ENCODE measurements at regions of chr12 and their contacts with region 1.

Region 1: GRCh38 chr12:401235-402028 is at the start of gene CCDC77:
- DNase-seq: peak; percentile 95
- H3K4me3 ChIP-seq: peak within 1 kb of the TSS; percentile 74 to 83
- H3K27ac ChIP-seq: peak within 1 kb of the TSS; percentile 44 to 54; a peak in 3 of 4 replicates
- H3K4me1 ChIP-seq: peaks cover 3 to 4% of the 10 kb centered on the region in 2 experiments; a peak in 3 of 4 replicates
- H3K27me3 ChIP-seq: no peaks in the 10 kb centered on the region
- CTCF ChIP-seq: peak; percentile 17; the same call in 1 of the 2 replicates
- EP300 ChIP-seq: no peak
- RAD21 ChIP-seq: no peak
- polyA plus RNA-seq, gene CCDC77: 5.9 and 6.4 TPM in 2 replicates

Region 2: GRCh38 chr12:159156-159782 is 242.2 kb before region 1 on chr12:
- CTCF ChIA-PET with region 1: no interaction called
- POLR2A ChIA-PET with region 1: no interaction called
- DNase-seq: no peak
- H3K4me3 ChIP-seq: no peak overlapping the region
- H3K27ac ChIP-seq: no peak overlapping the region
- H3K4me1 ChIP-seq: peaks cover 0 to 7% of the 10 kb centered on the region in 2 experiments; a peak in 1 of 4 replicates
- H3K27me3 ChIP-seq: no peaks in the 10 kb centered on the region
- CTCF ChIP-seq: no peak
- EP300 ChIP-seq: no peak
- RAD21 ChIP-seq: no peak

Region 3: DNA sequence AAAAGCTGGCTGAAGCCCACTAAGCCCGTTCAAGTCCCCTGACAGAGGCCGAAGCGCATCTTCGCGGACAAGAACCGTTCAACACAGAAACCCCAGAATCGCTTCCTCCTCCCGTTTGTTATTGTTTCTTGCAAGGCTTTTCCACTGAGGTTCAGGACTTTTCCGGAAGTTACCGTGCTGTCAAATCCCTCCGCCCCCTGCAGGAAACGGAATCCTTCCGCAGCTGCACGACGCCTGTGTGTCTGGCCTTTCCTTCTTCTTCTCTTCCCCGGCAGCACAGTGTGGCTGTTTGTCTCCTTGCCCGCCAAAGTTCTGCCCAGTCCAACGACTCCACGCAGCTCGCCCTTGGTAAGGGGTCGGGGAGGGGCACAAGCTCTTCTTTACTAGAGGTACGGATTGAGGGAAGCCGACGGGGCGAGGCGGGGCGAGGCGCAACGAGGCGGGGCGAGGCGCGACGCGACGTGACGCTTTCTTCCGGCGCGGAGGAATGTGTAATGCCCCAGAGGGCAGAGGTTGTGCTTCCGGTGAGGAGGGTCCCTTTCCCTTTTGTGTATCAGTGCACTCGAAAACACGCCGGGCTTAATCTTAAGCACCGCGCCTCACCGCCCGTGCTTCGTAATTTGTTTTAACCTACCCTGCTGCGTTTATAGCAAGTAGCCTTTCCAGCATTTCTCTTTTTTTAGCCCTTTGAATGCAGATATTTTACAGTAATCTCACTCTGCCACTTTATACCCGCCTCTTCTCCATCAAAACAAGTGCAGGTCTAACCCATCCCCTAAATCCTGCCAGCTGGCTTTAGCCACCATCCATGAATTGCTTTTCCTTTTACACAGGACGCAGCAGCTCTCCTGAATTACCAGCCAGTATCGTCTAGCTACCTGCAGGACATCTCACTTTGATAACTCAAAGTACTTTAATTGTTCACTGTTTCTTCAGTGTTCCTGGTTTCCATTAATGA is 12.0 kb before region 1 on chr12 and contains the start of gene KDM5A:
- CTCF ChIA-PET with region 1: interaction called, 16 read pairs
- POLR2A ChIA-PET with region 1: interaction called, 16 read pairs
- DNase-seq: peak; percentile 91
- H3K4me3 ChIP-seq: peak within 1 kb of the TSS; percentile 85 to 87
- H3K27ac ChIP-seq: peak within 1 kb of the TSS; percentile 97 to 99
- H3K4me1 ChIP-seq: peaks cover 0 to 3% of the 10 kb centered on the region in 2 experiments; a peak in 3 of 4 replicates
- H3K27me3 ChIP-seq: no peaks in the 10 kb centered on the region
- CTCF ChIP-seq: no peak
- EP300 ChIP-seq: peak in 1 of 2 experiments; percentile 42; a peak in 1 of 4 replicates
- RAD21 ChIP-seq: no peak
- polyA plus RNA-seq, gene KDM5A: 6.2 and 8.9 TPM in 2 replicates